GM18951 (cell line): ENCODE measurements at regions of chr3 and their contacts with region 1.

Region 1: DNA sequence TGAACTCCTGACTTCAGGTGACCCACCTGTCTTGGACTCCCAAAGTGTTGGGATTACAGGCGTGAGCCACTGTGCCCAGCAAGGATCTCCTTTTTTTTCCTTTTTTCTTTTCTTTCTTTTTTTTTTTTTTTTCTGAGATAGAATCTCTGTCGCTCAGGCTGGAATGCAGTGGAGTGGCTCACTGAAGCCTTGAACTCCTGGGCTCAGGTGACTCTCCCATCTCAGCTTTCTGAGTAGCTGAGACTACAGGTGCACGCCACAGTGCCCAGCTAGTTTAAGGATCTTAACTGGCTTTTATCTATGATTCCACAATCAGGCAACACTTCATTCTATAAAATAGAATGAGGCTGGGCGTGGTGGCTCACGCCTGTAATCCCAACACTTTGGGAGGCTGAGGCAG is 16.3 kb upstream of the NICN1 start:
- POLR2A ChIP-seq: no peak

Region 2: DNA sequence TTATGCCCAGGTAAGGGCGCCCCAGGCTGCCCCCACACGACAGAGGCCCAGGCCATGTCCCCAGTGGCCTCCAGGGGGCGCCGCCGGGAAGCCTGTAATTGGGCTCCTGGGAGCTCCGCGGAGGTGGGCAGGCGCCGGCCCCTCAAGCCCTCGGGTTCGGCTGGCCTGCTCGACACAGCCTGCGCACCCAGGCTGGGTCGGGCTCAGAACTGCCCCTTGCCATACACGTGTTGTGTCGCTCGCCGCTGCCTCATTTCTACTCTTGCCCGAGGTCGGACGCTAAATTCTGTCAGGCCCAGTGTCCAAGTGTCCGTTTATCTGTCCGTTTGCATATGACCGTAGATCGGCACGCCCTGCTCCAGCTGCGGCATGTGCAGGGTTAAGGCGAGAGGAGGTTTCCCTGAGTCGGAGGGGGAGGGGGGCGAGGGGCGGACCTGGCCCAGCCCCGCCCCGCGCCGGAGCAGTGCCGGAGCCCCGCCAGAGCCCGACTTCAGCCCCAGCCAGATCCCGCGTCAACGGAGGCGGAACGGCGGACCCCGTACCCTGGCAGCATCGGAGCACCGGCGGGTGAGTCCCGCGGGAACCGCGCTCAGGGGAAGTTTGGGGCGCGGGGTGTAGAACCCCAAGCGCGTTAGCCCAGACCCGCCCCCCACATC is 274.1 kb before region 1 on chr3 and contains the start of gene KLHDC8B:
- in situ Hi-C with region 1: loop called (anchors 10 kb)
- POLR2A ChIP-seq: no peak